ENCODE measurements at regions of chr13 and their contacts with region 1.

Region 1: GRCh38 chr13:113490496-113491417 is at the start of gene DCUN1D2:
- DNase-seq: peak; percentile 97
- H3K4me3 ChIP-seq: peak within 1 kb of the TSS; percentile 61 to 90 (median 78)
- H3K27ac ChIP-seq: peak within 1 kb of the TSS; percentile 63
- H3K4me1 ChIP-seq: peaks cover 46% of the 10 kb centered on the region
- H3K27me3 ChIP-seq: no peaks in the 10 kb centered on the region
- CTCF ChIP-seq: no peak
- POLR2A ChIP-seq: peak; percentile 66
- total RNA-seq, gene DCUN1D2: 19.4 and 24.9 TPM in 2 replicates

Region 2: GRCh38 chr13:113296842-113297369 is 193.9 kb before region 1 on chr13 and contains the start of gene LAMP1:
- CTCF ChIA-PET with region 1: no interaction called
- POLR2A ChIA-PET with region 1: interaction called, 3 read pairs
- dilution Hi-C with region 1: no loop called
- intact Hi-C with region 1: loop called (anchors 2 kb)
- DNase-seq: peak; percentile 97
- H3K4me3 ChIP-seq: peak within 1 kb of the TSS; percentile 57 to 93 (median 82)
- H3K27ac ChIP-seq: peak within 1 kb of the TSS; percentile 52
- H3K4me1 ChIP-seq: peaks cover 11% of the 10 kb centered on the region
- H3K27me3 ChIP-seq: peaks cover 4 to 11% of the 10 kb centered on the region in 2 experiments
- CTCF ChIP-seq: no peak
- POLR2A ChIP-seq: peak; percentile 49
- total RNA-seq, gene LAMP1: 285 and 286 TPM in 2 replicates

Region 3: GRCh38 chr13:113458253-113459065 is 32.3 kb before region 1 on chr13:
- CTCF ChIA-PET with region 1: interaction called, 12 read pairs
- POLR2A ChIA-PET with region 1: no interaction called
- dilution Hi-C with region 1: no loop called
- intact Hi-C with region 1: no loop called
- DNase-seq: no peak
- H3K4me3 ChIP-seq: no peak overlapping the region
- H3K27ac ChIP-seq: no peak overlapping the region
- H3K4me1 ChIP-seq: no peaks in the 10 kb centered on the region
- H3K27me3 ChIP-seq: no peaks in the 10 kb centered on the region
- CTCF ChIP-seq: peak; percentile 36 to 64
- POLR2A ChIP-seq: no peak

Region 4: GRCh38 chr13:113545455-113545930 is 54.7 kb after region 1 on chr13:
- CTCF ChIA-PET with region 1: interaction called, 3 read pairs
- POLR2A ChIA-PET with region 1: interaction called, 3 read pairs
- dilution Hi-C with region 1: no loop called
- intact Hi-C with region 1: loop called (anchors 2 kb)
- DNase-seq: peak; percentile 52
- H3K4me3 ChIP-seq: no peak overlapping the region
- H3K27ac ChIP-seq: peak overlapping the region; percentile 78
- H3K4me1 ChIP-seq: peaks cover 30% of the 10 kb centered on the region
- H3K27me3 ChIP-seq: no peaks in the 10 kb centered on the region
- CTCF ChIP-seq: no peak
- POLR2A ChIP-seq: no peak

Region 5: GRCh38 chr13:113802145-113802531 is 311.4 kb after region 1 on chr13:
- CTCF ChIA-PET with region 1: no interaction called
- POLR2A ChIA-PET with region 1: no interaction called
- dilution Hi-C with region 1: no loop called
- intact Hi-C with region 1: no loop called
- DNase-seq: no peak
- H3K4me3 ChIP-seq: no peak overlapping the region
- H3K27ac ChIP-seq: no peak overlapping the region
- H3K4me1 ChIP-seq: peaks cover 3% of the 10 kb centered on the region
- H3K27me3 ChIP-seq: no peaks in the 10 kb centered on the region
- CTCF ChIP-seq: no peak
- POLR2A ChIP-seq: no peak